Adrenal gland (tissue), 19 donors: ENCODE measurements at regions of chr13 and their contacts with region 1.

Region 1: GRCh38 chr13:101942038-101942437 is 459.8 kb downstream of the FGF14 start:
- DNase-seq: peak in 1 of 7 donors; percentile 62
- H3K4me3 ChIP-seq: no peak overlapping the region
- H3K27ac ChIP-seq: no peak overlapping the region
- H3K4me1 ChIP-seq: peaks cover 0 to 4% of the 10 kb centered on the region in 2 donors
- H3K27me3 ChIP-seq: no peaks in the 10 kb centered on the region
- CTCF ChIP-seq: peak in 5 of 6 experiments; percentile 32 to 69 (median 52)
- POLR2A ChIP-seq: no peak

Region 2: GRCh38 chr13:100363285-100363711 is 1578.7 kb before region 1 on chr13:
- intact Hi-C with region 1: no loop called
- DNase-seq: no peak
- H3K4me3 ChIP-seq: no peak overlapping the region
- H3K27ac ChIP-seq: peak overlapping the region in 1 of 5 donors; percentile 0
- H3K4me1 ChIP-seq: peaks cover 6 to 10% of the 10 kb centered on the region in 2 donors
- H3K27me3 ChIP-seq: no peaks in the 10 kb centered on the region
- CTCF ChIP-seq: no peak
- POLR2A ChIP-seq: no peak

Region 3: GRCh38 chr13:102452831-102453230 is 510.8 kb after region 1 on chr13:
- intact Hi-C with region 1: loop called in 1 of 2 experiments (anchors 10 kb)
- DNase-seq: no peak
- H3K4me3 ChIP-seq: no peak overlapping the region
- H3K27ac ChIP-seq: no peak overlapping the region
- H3K4me1 ChIP-seq: no peaks in the 10 kb centered on the region
- H3K27me3 ChIP-seq: no peaks in the 10 kb centered on the region
- CTCF ChIP-seq: no peak
- POLR2A ChIP-seq: no peak